Posterior cingulate gyrus (tissue), 11 donors: ENCODE measurements at regions of chr13 and their contacts with region 1.

Region 1: GRCh38 chr13:27449936-27450828 is at the start of gene MTIF3:
- DNase-seq: peak; percentile 88 to 99 (median 93)

Region 2: DNA sequence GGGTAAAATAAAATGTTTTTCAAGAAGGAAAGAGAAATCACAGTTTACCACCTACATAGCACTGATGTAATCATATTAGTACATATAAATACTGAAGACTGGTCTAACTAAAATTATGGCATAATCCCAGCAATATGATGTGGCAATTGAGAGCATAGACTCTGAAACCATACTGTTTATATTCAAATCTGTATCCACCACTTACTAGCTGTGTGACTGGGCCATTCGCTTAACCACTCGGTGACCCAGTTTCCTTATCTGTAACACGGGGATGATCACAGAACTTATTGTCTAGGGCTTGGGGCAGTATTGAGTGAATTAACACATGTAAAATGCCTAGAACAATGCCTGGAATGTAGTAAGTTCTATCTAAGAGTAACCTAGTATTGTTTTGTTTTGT is 38.8 kb before region 1 on chr13:
- intact Hi-C with region 1: no loop called
- DNase-seq: no peak

Region 3: DNA sequence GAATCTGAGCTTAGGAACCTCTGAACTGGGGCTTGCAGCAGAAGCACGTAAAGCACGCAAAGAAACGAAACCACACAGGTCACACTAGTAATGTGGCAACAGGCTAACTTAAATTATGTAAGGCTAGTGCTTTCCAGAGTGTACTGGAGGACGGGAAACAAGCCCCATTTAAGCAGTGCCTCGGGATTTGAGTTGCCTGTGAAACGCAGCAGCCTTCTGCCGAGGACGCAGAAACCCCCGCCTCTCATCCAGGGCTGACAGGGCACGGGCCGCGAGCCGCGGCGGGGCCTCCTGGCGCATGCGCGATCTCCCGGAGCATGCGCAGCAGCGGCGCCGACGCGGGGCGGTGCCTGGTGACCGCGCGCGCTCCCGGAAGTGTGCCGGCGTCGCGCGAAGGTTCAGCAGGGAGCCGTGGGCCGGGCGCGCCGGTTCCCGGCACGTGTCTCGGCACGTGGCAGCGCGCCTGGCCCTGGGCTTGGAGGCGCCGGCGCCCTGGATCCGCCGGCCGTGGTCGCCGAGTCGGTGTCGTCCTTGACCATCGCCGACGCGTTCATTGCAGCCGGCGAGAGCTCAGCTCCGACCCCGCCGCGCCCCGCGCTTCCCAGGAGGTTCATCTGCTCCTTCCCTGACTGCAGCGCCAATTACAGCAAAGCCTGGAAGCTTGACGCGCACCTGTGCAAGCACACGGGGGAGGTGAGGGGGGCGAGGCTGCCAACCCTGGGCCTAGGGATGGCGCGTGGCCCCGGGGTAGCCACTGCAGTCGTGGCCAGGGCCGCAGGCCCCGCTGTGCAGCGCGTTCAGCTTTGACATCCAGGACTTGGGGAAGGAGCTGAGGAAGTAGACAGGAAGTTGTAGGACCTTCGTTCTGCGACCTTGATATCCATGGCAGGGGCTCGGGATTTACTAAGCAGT is 25.7 kb before region 1 on chr13 and contains the start of gene GTF3A:
- intact Hi-C with region 1: loop called (anchors 2 kb)
- DNase-seq: peak; percentile 62 to 97 (median 74)